K562 (cell line): ENCODE measurements at regions of chr6 and their contacts with region 1.

Region 1: GRCh38 chr6:37559501-37559900 is 59.8 kb upstream of the CCDC167 start:
- DNase-seq: no peak
- ATAC-seq: no peak
- H3K4me3 ChIP-seq: no peak overlapping the region
- H3K27ac ChIP-seq: no peak overlapping the region
- H3K4me1 ChIP-seq: no peaks in the 10 kb centered on the region; a peak in 1 of 5 replicates
- H3K27me3 ChIP-seq: peaks cover 69 to 88% of the 10 kb centered on the region in 2 experiments
- CTCF ChIP-seq: no peak
- EP300 ChIP-seq: no peak
- POLR2A ChIP-seq: no peak
- RAD21 ChIP-seq: no peak

Region 2: GRCh38 chr6:37547564-37548061 is 11.9 kb before region 1 on chr6:
- CTCF ChIA-PET with region 1: no interaction called
- POLR2A ChIA-PET with region 1: interaction called, 15 read pairs
- in situ Hi-C with region 1: no loop called
- intact Hi-C with region 1: no loop called
- DNase-seq: no peak
- ATAC-seq: no peak
- H3K4me3 ChIP-seq: no peak overlapping the region
- H3K27ac ChIP-seq: no peak overlapping the region
- H3K4me1 ChIP-seq: no peaks in the 10 kb centered on the region
- H3K27me3 ChIP-seq: peaks cover 61 to 91% of the 10 kb centered on the region in 2 experiments
- CTCF ChIP-seq: no peak
- EP300 ChIP-seq: no peak
- POLR2A ChIP-seq: no peak
- RAD21 ChIP-seq: no peak